ENCODE measurements at regions of chr18 and their contacts with region 1.

Region 1: DNA sequence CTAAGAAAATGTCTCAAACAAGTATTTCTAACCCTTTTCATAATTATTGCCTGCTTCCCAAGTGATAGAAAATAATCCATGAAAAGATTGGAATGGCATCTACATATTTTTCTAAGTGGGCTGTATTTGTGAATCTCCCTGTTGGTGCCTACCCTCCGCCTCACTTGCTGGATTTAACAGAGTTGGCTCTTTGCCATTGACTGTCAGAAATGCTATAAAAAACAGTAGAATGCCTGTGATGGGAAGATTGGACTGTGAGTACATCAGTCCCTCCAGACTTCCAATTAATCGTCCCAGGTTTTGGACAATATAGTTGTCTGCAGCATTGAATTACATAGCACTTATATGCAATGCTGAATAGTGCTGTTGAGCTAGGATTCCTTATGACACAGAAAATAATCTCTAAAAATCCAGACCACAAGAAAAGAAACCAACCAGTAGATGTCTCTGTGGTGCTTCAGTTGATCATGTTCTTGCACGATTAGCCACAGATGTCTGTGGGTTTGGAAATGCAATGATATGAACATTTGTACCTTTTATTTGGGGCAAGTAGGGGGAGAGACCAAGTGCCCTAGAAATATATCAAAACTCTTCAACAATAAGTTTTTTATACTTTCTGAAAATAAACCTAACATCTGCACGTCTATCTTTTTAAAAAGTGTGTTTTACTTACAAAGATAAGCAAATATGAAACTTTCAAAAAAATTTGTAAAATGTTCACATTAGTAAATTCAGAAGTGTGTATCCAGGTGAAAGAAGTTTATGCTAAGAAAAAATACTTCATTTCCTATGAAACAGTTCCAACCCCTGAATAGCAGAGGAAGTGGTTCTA is 88.5 kb downstream of the DYNAP start:
- DNase-seq: peak; percentile 77

Region 2: GRCh38 chr18:54860941-54861340 is 181.4 kb after region 1 on chr18:
- in situ Hi-C with region 1: no loop called
- DNase-seq: peak; percentile 15

Region 3: DNA sequence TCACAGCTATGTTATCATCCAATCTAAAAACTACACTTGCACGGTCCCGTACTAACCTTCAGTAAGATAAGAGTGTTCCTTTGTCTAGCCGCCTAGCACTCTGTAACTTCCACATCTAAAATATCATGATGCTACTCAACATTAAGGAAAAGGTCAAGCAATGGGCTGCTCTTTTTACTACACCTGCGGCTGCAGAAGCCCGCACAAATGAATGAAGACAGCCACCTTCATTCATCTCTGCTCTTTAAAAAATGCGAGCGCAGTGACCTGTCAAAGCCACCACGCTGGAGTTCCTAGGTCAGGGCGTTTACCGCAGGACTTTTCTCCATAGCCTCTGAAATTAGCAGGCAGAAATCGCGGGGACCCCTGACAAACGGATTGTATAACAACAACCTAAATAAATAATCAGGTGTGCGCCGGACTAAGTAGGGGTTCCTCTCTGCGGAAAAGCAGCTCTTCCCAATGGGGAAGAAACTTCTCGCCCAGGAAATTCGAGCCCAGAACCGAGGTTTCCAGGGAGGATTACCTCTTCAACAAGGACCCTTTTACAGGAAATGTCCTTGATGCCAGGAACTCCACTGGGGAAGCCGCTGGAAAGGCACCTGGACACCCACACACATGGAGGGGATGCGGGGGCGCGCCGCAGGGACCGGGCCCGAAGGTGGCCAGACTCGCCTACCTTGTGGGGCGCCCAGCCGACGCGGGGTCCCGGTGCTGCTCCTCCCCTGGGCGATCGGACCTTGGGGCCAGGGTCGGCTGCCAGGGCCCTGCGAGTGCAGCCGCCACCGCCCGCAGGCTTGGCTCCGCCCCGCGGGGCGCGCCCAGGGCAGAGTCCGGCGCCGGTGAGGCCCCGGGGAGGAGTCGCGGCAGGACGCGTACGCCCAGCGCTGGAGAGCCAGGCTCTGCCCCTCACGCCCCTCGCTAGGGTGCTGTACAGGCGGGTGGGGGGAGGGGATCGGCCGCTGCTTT is 279.4 kb after region 1 on chr18 and contains the start of gene CCDC68:
- in situ Hi-C with region 1: loop called (anchors 25 kb)
- DNase-seq: no peak

Region 4: DNA sequence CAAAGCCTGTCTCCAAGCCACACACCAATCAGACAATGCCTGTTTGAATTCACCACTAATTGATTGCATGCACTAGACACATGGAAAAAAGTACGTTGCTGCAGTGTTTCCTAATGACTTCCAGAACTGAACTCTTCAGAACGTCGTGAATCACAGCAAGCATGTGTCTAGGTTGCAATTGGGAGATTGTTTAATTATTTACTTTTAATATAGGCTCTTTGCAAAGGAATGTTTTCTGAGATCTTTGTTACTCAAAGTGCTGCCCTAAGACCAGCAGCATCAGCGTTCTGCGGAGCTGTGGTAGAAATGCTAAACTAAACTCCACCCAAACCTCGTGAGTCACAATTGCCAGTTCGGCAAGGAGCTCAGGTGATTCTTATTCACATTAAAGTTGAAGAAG is 332.5 kb after region 1 on chr18:
- in situ Hi-C with region 1: no loop called
- DNase-seq: no peak

Region 5: GRCh38 chr18:55069497-55069896 is 390.0 kb after region 1 on chr18:
- in situ Hi-C with region 1: no loop called
- DNase-seq: no peak

Measured in KBM-7 (cell line).